ENCODE measurements at regions of chr4 and their contacts with region 1.

Region 1: GRCh38 chr4:184538023-184538599 is 63.8 kb upstream of the IRF2 start:
- DNase-seq: peak; percentile 96
- H3K4me3 ChIP-seq: peak overlapping the region; percentile 60 to 66 (median 64)
- H3K27ac ChIP-seq: peak overlapping the region; percentile 90 to 97 (median 92)
- H3K4me1 ChIP-seq: peaks cover 0 to 28% (median 21%) of the 10 kb centered on the region in 4 donors
- H3K27me3 ChIP-seq: no peaks in the 10 kb centered on the region
- CTCF ChIP-seq: peak; percentile 67 to 88 (median 79)
- EP300 ChIP-seq: no peak
- POLR2A ChIP-seq: no peak

Region 2: DNA sequence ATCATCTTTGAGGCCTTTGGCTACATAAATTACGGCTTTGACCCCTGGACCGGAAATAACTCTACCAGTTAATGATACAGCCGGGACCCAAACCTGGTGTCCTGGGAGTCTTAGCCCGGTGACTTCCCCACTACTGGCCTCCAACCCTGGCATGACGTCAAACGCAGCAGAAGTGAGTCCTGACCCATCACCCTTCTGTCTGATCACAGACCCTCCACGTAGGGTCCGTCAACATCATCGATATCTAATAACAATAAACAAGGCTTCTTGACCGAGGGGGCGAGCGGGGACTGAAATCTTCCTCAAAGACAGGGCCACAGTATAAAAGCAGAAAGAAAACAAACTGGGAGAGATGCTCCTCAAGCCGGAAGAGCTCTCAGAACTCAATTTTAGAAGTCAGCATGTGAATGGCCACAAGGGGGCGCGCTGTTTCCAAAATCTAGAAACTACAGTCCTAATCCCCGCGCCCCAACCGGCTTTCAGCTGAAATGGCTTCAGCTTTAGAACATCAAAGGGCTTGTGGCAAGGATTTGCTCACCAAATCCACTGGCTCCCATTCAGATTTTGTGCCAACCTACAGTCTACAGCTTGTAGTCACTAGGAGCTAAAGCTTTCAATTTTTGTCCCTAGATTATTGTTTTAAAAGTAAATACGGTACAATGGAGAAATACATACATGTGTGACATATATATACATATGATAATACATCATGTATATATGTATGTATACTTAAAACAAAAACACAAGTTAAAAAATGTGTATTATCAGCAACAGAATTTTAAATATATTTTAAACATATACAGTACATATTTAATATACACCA is 274.0 kb before region 1 on chr4:
- intact Hi-C with region 1: loop called (anchors 1 kb)
- DNase-seq: peak; percentile 96
- H3K4me3 ChIP-seq: no peak overlapping the region
- H3K27ac ChIP-seq: peak overlapping the region in 1 of 4 donors; percentile 5
- H3K4me1 ChIP-seq: peaks cover 0 to 8% (median 0%) of the 10 kb centered on the region in 4 donors
- H3K27me3 ChIP-seq: no peaks in the 10 kb centered on the region
- CTCF ChIP-seq: peak; percentile 72 to 94 (median 90)
- EP300 ChIP-seq: no peak
- POLR2A ChIP-seq: no peak

Region 3: GRCh38 chr4:184343502-184344177 is 194.5 kb before region 1 on chr4:
- intact Hi-C with region 1: loop called (anchors 5 kb)
- DNase-seq: peak; percentile 88
- H3K4me3 ChIP-seq: peak overlapping the region; percentile 38 to 61 (median 56)
- H3K27ac ChIP-seq: peak overlapping the region; percentile 67 to 82 (median 76)
- H3K4me1 ChIP-seq: peaks cover 0 to 15% (median 4%) of the 10 kb centered on the region in 4 donors
- H3K27me3 ChIP-seq: no peaks in the 10 kb centered on the region
- CTCF ChIP-seq: no peak
- EP300 ChIP-seq: no peak
- POLR2A ChIP-seq: peak in 1 of 2 donors; percentile 44

Region 4: DNA sequence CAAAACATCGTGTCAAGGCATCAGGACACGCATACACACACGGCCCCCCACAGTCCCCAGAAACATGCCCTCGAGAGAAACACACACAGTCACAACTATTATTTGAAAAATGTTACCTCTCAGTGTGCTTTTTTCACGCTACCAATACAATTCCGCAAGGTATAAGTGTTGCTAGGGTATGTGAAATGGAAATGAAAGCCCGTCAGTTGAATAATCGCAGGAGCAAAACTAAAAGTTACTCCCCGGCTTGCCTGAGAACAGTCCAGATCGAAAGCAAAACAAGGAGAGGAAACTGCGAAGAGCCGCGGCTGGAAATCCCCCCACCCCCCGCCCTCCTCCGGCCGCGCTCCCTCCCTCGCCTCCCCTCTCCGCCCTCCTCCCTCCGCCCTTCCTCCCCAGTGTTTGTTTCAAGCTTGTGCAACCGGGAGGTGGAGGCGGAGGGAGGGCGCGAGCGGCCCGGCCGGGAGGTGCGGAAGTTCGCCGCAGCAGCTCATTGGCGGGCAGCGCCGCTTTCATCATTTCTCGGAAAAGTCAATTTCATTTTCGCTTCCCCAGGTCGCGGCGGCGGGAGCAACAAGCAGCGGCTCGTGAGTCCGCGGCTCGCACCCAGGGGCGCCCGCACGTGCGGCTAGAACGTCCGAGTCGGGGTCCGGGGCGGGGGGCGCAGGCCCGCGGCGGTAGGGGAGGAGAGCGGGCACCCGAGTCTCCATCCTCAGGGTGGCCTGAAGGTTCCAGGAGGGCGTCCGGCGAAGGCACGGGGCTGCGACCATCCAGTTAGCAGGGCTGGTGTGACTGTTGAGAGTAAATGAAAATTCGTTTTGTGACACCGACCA is 63.6 kb before region 1 on chr4 and contains the start of gene IRF2:
- intact Hi-C with region 1: loop called (anchors 1 kb)
- DNase-seq: peak; percentile 99
- H3K4me3 ChIP-seq: peak within 1 kb of the TSS; percentile 80 to 95 (median 88)
- H3K27ac ChIP-seq: peak within 1 kb of the TSS; percentile 93 to 99 (median 96)
- H3K4me1 ChIP-seq: peaks cover 0 to 45% (median 34%) of the 10 kb centered on the region in 4 donors
- H3K27me3 ChIP-seq: no peaks in the 10 kb centered on the region
- CTCF ChIP-seq: peak in 2 of 4 experiments; percentile 14 to 16
- EP300 ChIP-seq: peak in 3 of 4 donors; percentile 1 to 89 (median 68)
- POLR2A ChIP-seq: peak; percentile 87 to 91
- total RNA-seq, gene IRF2: 29.3 to 39.7 (median 31.3) TPM

Region 5: DNA sequence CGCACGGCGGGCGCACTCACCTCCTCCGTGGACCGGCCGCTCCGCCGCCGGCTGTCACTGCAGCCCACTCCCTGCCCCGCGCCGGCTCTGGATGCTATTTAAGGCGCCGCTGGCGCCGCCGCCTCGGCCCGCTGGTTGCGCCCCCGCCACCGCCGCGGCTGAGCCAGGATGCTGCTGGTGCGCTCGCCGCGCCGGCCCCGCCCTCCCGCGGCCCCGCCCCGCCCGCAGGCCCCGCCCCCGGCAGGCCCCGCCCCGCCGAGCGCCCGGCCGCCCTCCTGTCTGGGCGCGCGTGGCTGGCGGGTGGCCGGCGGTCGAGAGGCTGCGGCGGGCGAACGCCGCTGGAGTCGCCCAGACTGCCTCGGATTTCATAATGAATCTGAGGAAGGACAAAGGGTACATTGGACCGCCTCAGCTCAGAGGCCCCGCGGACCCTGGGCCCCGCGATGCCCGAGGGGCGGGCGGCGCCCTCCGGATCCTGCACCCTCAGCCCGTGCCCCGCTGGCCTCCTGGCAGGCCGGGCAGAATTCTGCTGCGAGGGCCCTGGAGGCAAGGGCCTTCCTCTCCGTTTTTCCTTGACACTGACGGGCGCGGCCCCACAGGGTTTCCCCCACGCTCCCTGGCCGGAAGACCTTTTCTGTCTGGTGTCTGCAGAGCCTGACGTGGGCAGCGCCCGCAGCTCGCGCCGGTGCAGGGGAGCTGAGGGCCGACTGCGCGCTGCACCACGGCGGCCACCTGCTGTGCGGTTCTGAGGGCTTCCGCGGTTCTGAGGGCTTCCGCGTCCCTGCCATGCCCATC is 288.0 kb after region 1 on chr4 and contains the start of gene ACSL1:
- intact Hi-C with region 1: loop called (anchors 5 kb)
- DNase-seq: peak; percentile 90
- H3K4me3 ChIP-seq: peak within 1 kb of the TSS; percentile 46 to 88 (median 65)
- H3K27ac ChIP-seq: peak within 1 kb of the TSS; percentile 80 to 91 (median 84)
- H3K4me1 ChIP-seq: peaks cover 0 to 22% (median 10%) of the 10 kb centered on the region in 4 donors
- H3K27me3 ChIP-seq: no peaks in the 10 kb centered on the region
- CTCF ChIP-seq: no peak
- EP300 ChIP-seq: no peak
- POLR2A ChIP-seq: no peak
- total RNA-seq, gene ACSL1: 37.8 to 118 (median 72.3) TPM

Measured in sigmoid colon (tissue), 7 donors.